ENCODE measurements at regions of chr17 and their contacts with region 1.

Region 1: GRCh38 chr17:8630802-8631553 is 453 bp upstream of the MYH10 start:
- DNase-seq: peak; percentile 98 to 99
- ATAC-seq: peak; percentile 96
- H3K4me3 ChIP-seq: peak overlapping the region; percentile 56 to 61
- H3K27ac ChIP-seq: peak overlapping the region; percentile 88 to 91
- H3K4me1 ChIP-seq: no peaks in the 10 kb centered on the region
- H3K27me3 ChIP-seq: no peaks in the 10 kb centered on the region

Region 2: GRCh38 chr17:8649157-8650118 is 18.5 kb after region 1 on chr17:
- intact Hi-C with region 1: loop called (anchors 2 kb)
- DNase-seq: peak; percentile 82 to 87
- ATAC-seq: peak; percentile 92
- H3K4me3 ChIP-seq: no peak overlapping the region
- H3K27ac ChIP-seq: peak overlapping the region; percentile 100
- H3K4me1 ChIP-seq: peaks cover 0 to 3% of the 10 kb centered on the region in 2 donors
- H3K27me3 ChIP-seq: no peaks in the 10 kb centered on the region

Region 3: GRCh38 chr17:8673612-8674011 is 42.6 kb after region 1 on chr17:
- intact Hi-C with region 1: loop called in 1 of 2 experiments (anchors 2 kb)
- DNase-seq: peak in 1 of 2 donors; percentile 59
- ATAC-seq: peak; percentile 61
- H3K4me3 ChIP-seq: no peak overlapping the region
- H3K27ac ChIP-seq: peak overlapping the region; percentile 91 to 98
- H3K4me1 ChIP-seq: peaks cover 5 to 12% of the 10 kb centered on the region in 2 donors
- H3K27me3 ChIP-seq: no peaks in the 10 kb centered on the region

Region 4: GRCh38 chr17:8745586-8746500 is 114.9 kb after region 1 on chr17:
- intact Hi-C with region 1: loop called (anchors 5 kb)
- DNase-seq: peak; percentile 89 to 96
- ATAC-seq: peak; percentile 93
- H3K4me3 ChIP-seq: peak overlapping the region; percentile 21 to 80
- H3K27ac ChIP-seq: peak overlapping the region; percentile 67 to 93
- H3K4me1 ChIP-seq: no peaks in the 10 kb centered on the region
- H3K27me3 ChIP-seq: no peaks in the 10 kb centered on the region

Measured in aorta (tissue), 5 donors.